Left ventricle myocardium superior (tissue), 1 donor: ENCODE measurements at regions of chr11 and their contacts with region 1.

Region 1: DNA sequence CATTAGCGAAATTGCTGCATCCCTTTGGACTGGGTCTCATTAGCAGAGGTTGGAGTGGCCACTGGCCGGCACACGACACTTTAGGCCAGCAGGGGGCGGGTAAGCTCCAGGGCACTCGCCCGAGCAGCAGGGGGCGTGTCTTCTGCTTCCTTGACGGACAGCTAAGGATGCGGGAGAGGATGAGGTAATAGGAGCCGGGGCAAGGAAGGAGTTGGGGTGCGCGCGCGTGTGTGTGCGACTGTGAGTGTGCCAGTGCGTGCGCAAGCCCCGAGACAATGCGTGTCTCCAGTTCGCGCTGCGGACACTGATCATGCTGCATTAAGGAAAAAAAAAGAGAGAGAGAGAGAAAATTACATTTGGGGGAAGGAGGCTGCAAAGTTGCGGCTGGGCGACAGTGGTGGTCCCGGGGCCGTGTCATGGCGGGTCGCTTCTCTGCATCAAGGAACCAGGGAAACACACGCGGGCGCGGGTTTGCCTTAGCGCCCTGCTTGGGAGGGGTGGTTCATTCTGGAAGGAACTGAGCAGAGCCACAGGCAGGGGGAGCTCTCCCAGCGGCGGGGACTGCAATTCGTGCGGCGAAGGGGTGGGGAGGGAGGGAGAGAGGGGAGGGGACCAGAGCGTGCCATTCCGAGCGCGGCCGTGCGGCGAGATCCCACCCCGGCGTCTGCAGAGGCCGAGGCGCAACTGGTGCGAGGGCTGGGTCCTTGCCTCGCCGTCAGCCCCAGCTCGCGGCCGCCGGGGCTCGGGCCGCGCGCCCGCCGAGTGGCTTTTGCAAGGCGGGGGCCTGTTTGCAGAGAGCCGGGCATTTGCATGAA is at the start of gene DTX4:
- DNase-seq: peak; percentile 96
- ATAC-seq: peak; percentile 95
- total RNA-seq, gene DTX4: 2.6 TPM

Region 2: DNA sequence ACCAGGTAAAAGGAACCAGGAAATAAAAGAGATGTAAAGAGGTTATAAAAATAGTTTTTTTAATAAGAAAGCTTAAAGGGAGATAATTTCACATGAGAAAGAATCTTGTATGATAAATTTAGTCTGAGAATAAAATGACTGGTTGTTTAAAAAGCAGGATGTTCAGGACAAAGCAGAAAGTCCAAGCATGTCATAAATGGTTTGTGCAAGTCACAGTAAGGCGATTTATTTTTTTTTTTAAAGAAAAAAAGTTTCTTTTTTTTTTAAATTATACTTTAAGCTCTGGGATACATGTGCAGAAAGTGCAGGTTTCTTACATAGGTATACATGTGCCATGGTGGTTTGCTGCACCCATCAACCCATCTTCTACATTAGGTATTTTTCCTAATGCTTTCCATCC is 358.0 kb before region 1 on chr11:
- intact Hi-C with region 1: no loop called
- DNase-seq: no peak
- ATAC-seq: no peak

Region 3: GRCh38 chr11:59040607-59041006 is 131.1 kb before region 1 on chr11:
- intact Hi-C with region 1: no loop called
- DNase-seq: no peak
- ATAC-seq: no peak

Region 4: GRCh38 chr11:59207988-59208451 is 36.3 kb after region 1 on chr11:
- intact Hi-C with region 1: loop called (anchors 5 kb)
- DNase-seq: no peak
- ATAC-seq: peak; percentile 61

Region 5: DNA sequence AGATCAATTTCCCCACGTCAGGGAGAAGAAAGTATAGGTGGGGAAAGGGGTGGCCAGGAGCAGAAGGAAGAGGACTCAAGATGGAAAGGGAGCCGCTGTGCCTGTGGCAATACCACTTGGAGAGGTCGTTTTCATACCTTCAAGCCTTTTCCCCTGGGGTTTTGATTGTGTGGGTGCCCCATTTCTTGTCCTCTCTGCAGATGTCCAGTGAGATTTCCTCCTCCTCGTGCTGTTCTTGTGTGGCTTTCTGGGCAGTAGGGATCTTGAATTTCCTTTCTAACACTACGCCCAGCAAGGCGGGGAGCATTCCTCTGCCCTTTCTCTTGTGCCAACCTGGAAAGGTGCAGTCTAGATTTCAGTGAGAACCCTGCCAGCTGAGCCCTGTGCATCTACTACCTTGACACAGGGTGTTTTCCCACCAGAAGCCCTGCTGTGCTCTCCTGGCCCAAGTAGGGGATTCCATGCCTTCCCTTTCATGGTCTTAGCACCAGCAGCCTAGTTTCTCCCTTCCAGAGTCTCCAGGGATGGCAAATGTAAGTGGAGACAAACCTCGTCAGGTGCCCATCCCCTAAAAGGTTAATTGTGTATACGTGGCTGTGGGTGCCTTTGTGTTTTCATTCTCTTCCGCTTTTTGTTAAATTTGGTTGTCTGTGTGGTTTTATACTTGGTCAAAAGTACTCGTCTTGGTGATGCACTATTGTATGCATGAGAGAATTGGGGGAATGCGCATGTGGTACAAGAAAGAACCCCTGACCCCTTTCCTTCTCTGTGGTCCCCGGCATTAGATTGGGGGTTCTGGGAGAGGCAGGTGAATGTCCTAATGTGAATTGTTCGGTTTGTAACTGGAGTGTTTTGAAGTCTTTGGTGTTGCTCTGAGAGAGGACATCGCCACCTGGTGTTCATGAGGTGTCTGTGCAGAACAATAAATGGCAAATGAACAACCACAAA is 112.4 kb after region 1 on chr11:
- intact Hi-C with region 1: loop called (anchors 10 kb)
- DNase-seq: no peak
- ATAC-seq: peak; percentile 60

Region 6: DNA sequence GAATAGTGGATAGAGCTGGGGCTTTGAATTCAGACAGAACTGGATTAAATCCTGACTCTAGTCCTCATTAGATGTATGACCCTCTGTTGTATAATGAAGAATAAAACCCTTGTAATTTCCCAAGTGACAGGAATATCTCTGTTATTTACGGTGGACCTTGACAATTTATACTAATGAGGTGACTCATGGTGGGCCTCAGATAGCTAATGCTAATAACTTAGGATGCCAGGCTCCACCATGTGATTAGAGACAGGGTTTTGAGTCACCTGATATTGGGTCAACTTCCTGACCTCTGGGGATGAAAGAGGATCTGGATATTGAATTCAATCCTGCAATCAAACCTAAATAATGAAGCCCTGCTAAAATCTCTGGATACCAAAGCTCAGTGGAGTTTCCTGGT is 410.3 kb after region 1 on chr11:
- intact Hi-C with region 1: no loop called
- DNase-seq: no peak
- ATAC-seq: no peak